Activated CD4-positive, alpha-beta T cell treated with anti-CD3 and anti-CD28 coated beads, Interleukin-2, amount 10 ng/mL, durations not matched to agents 24 days and 14 days (primary cell): ENCODE measurements at regions of chr19 and their contacts with region 1.

Region 1: GRCh38 chr19:45692187-45693105 is at the start of gene QPCTL:
- DNase-seq: peak; percentile 99
- H3K4me3 Mint-ChIP-seq: peak within 1 kb of the TSS; percentile 94
- H3K27ac Mint-ChIP-seq: peak within 1 kb of the TSS; percentile 97
- H3K4me1 Mint-ChIP-seq: peaks cover 19% of the 10 kb centered on the region
- H3K27me3 Mint-ChIP-seq: no peaks in the 10 kb centered on the region
- total RNA-seq, gene QPCTL: 16.7 and 20.9 TPM in 2 replicates

Region 2: DNA sequence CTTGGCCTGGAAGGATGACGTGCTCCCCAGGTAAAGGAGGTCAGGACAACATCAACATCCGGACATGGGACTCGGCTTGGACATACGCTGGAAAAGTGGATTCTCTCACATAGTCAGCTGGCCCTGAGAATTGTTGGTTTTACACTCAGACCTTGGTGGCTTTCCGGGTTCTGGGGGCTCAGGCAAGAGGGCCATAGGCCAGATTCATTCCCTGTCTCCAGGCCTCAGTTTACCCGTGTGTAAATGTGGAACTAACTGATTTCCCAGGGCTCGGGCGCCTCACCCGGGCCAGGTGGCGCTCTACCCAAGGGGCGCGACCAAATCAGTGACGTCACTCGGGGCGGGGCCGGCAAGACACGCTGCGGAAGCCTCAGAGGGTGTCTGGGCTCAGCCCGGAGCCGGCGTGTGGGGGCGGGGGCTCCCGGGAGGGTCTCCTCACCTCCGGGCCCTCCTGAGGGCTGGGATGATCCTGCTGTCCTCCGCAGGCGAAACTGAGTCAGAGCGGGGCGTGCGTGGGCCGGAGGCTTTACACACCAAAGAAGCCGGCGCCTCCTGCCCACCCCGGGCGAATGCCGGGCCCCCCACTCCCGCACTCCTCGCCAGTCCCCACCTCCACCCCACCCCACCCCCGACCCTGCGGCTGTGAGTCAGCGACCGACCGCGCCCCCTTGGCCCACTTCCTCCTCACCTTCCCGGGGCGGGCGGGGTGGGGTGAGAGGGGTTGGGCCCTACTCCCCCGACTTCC is 186.0 kb before region 1 on chr19:
- intact Hi-C with region 1: loop called (anchors 1 kb)
- DNase-seq: peak; percentile 99
- H3K4me3 Mint-ChIP-seq: peak overlapping the region; percentile 92
- H3K27ac Mint-ChIP-seq: peak overlapping the region; percentile 97
- H3K4me1 Mint-ChIP-seq: peaks cover 37% of the 10 kb centered on the region
- H3K27me3 Mint-ChIP-seq: no peaks in the 10 kb centered on the region

Region 3: GRCh38 chr19:45667620-45668341 is 24.7 kb before region 1 on chr19 and contains the start of gene GIPR:
- intact Hi-C with region 1: loop called (anchors 2 kb)
- DNase-seq: peak; percentile 84
- H3K4me3 Mint-ChIP-seq: peak within 1 kb of the TSS; percentile 94
- H3K27ac Mint-ChIP-seq: peak within 1 kb of the TSS; percentile 83
- H3K4me1 Mint-ChIP-seq: peaks cover 27% of the 10 kb centered on the region
- H3K27me3 Mint-ChIP-seq: peaks cover 9% of the 10 kb centered on the region
- total RNA-seq, gene GIPR: 4.2 and 5.8 TPM in 2 replicates

Region 4: DNA sequence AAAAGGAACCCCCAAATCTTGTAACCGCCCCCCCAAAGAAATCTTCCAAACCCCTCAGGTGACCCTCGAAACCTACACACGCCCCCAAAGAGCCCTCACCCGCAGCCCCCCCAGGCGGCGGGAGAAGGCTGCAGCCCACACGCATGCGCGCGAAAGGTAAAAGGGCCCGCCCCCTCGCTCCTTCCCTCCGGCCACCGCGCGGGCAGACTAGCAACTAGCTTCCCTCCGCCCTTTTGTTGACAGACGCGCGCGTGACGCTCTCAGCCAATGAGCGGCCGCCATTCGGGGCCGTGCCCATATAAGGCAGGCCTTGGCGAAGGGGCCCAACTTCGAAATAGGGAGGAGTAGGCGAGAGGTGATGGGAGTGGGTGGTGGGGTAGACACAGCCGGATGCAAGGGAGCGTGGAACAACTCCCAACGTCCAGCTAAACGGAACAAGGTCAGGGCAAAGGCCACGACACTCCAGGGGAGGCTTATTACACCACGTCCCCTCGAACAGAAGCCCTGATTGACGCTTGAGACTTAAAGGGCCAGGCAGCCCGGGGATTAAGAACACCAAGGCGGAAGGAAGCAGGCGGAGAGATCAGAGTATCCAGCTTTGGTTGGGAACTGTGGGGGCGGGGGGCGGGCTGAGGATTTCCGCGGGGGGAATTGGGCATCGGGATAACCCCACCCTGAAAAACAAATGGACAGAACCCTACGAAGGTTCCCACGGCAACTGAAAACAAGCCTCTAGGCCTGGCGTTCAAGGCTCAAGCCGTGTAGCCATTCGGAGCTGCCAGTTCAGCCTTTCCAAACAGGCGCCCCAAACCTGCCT is 24.9 kb after region 1 on chr19:
- intact Hi-C with region 1: loop called (anchors 1 kb)
- DNase-seq: peak; percentile 99
- H3K4me3 Mint-ChIP-seq: peak overlapping the region; percentile 88
- H3K27ac Mint-ChIP-seq: peak overlapping the region; percentile 97
- H3K4me1 Mint-ChIP-seq: peaks cover 33% of the 10 kb centered on the region
- H3K27me3 Mint-ChIP-seq: peaks cover 2% of the 10 kb centered on the region

Region 5: GRCh38 chr19:45770192-45771101 is 78.0 kb after region 1 on chr19:
- intact Hi-C with region 1: loop called (anchors 1 kb)
- DNase-seq: peak; percentile 97
- H3K4me3 Mint-ChIP-seq: peak overlapping the region; percentile 93
- H3K27ac Mint-ChIP-seq: peak overlapping the region; percentile 56
- H3K4me1 Mint-ChIP-seq: peaks cover 12% of the 10 kb centered on the region
- H3K27me3 Mint-ChIP-seq: peaks cover 20% of the 10 kb centered on the region